MCF 10A (cell line): ENCODE measurements at regions of chr6 and their contacts with region 1.

Region 1: GRCh38 chr6:137218917-137219663 is at the start of gene IFNGR1:
- DNase-seq: peak; percentile 96
- H3K4me3 Mint-ChIP-seq: peak within 1 kb of the TSS; percentile 91
- H3K27ac Mint-ChIP-seq: peak within 1 kb of the TSS; percentile 93
- H3K4me1 Mint-ChIP-seq: peaks cover 38% of the 10 kb centered on the region
- H3K27me3 Mint-ChIP-seq: no peaks in the 10 kb centered on the region
- CTCF ChIP-seq: no peak
- total RNA-seq, gene IFNGR1: 57.9 and 58.4 TPM in 2 replicates

Region 2: DNA sequence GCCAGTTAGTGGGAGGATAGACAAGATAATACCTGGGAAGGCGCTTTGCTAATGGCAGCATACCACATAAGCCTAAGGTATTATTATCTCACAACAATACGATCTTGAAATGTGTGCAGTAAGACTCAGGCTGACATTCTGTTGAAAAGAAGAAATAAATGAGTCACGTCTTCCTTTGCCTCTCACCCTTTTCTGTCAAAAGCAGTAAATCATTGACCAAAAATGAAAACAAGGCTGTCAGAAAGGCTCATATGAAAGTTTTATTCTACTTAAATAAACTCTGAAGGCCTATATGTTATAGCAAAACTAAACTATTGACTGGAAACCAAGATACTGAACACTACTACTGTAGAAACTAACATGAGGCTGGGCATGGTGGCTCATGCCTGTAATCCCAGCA is 131.2 kb before region 1 on chr6:
- CTCF ChIA-PET with region 1: no interaction called
- POLR2A ChIA-PET with region 1: no interaction called
- intact Hi-C with region 1: no loop called
- DNase-seq: no peak
- H3K4me3 Mint-ChIP-seq: no peak overlapping the region
- H3K27ac Mint-ChIP-seq: no peak overlapping the region
- H3K4me1 Mint-ChIP-seq: no peaks in the 10 kb centered on the region
- H3K27me3 Mint-ChIP-seq: no peaks in the 10 kb centered on the region
- CTCF ChIP-seq: no peak

Region 3: DNA sequence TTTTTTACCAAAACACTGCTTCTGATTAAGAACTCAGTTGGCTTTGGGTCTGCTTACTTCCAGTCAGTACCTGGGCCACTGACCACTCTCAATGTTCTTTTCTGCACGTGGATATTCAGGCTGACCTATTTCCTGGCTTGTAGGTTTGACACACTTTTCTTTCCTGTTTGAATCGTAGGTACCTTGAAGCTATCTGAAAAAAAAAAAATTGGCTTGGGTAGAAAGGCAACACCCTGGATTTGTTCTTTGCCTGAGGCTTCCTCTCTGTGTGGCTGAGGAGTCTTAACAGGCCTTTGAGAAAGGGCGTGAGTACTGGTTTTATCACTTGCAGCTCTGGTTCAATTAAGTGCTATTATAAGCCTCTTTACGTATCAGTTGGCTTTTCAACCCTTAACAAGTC is 113.7 kb before region 1 on chr6:
- CTCF ChIA-PET with region 1: no interaction called
- POLR2A ChIA-PET with region 1: interaction called, 20 read pairs
- intact Hi-C with region 1: no loop called
- DNase-seq: peak; percentile 81
- H3K4me3 Mint-ChIP-seq: no peak overlapping the region
- H3K27ac Mint-ChIP-seq: peak overlapping the region; percentile 85
- H3K4me1 Mint-ChIP-seq: peaks cover 25% of the 10 kb centered on the region
- H3K27me3 Mint-ChIP-seq: no peaks in the 10 kb centered on the region
- CTCF ChIP-seq: no peak

Region 4: GRCh38 chr6:137206577-137206976 is 12.5 kb before region 1 on chr6:
- CTCF ChIA-PET with region 1: interaction called, 4 read pairs
- POLR2A ChIA-PET with region 1: interaction called, 16 read pairs
- intact Hi-C with region 1: no loop called
- DNase-seq: no peak
- H3K4me3 Mint-ChIP-seq: no peak overlapping the region
- H3K27ac Mint-ChIP-seq: no peak overlapping the region
- H3K4me1 Mint-ChIP-seq: peaks cover 40% of the 10 kb centered on the region
- H3K27me3 Mint-ChIP-seq: no peaks in the 10 kb centered on the region
- CTCF ChIP-seq: no peak

Region 5: DNA sequence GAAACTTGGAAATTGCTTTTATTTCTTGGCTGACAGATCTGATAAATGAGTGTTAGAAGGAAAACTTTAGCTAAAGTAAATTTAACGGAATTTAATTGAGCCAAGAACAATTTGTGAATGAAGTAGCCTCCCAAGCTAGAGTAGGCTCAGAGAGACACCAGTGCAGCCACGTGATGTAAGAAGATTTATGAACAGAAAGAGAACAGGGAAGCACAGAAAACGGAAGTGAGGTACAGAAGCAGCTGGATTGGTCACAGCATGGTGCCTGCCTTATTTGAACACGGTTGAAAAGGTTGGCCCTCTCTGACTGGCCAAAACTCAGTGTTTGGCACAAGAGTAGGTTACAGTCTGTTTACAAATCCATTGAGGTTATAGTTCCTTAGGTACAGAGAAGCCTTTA is 29.6 kb after region 1 on chr6:
- CTCF ChIA-PET with region 1: interaction called, 4 read pairs
- POLR2A ChIA-PET with region 1: interaction called, 651 read pairs
- intact Hi-C with region 1: no loop called
- DNase-seq: no peak
- H3K4me3 Mint-ChIP-seq: no peak overlapping the region
- H3K27ac Mint-ChIP-seq: no peak overlapping the region
- H3K4me1 Mint-ChIP-seq: peaks cover 7% of the 10 kb centered on the region
- H3K27me3 Mint-ChIP-seq: no peaks in the 10 kb centered on the region
- CTCF ChIP-seq: no peak

Region 6: GRCh38 chr6:137271245-137272183 is 52.4 kb after region 1 on chr6:
- CTCF ChIA-PET with region 1: interaction called, 12 read pairs
- POLR2A ChIA-PET with region 1: interaction called, 15 read pairs
- intact Hi-C with region 1: no loop called
- DNase-seq: peak; percentile 71
- H3K4me3 Mint-ChIP-seq: no peak overlapping the region
- H3K27ac Mint-ChIP-seq: no peak overlapping the region
- H3K4me1 Mint-ChIP-seq: peaks cover 19% of the 10 kb centered on the region
- H3K27me3 Mint-ChIP-seq: no peaks in the 10 kb centered on the region
- CTCF ChIP-seq: peak; percentile 81